ENCODE measurements at regions of chr21 and their contacts with region 1.

Region 1: DNA sequence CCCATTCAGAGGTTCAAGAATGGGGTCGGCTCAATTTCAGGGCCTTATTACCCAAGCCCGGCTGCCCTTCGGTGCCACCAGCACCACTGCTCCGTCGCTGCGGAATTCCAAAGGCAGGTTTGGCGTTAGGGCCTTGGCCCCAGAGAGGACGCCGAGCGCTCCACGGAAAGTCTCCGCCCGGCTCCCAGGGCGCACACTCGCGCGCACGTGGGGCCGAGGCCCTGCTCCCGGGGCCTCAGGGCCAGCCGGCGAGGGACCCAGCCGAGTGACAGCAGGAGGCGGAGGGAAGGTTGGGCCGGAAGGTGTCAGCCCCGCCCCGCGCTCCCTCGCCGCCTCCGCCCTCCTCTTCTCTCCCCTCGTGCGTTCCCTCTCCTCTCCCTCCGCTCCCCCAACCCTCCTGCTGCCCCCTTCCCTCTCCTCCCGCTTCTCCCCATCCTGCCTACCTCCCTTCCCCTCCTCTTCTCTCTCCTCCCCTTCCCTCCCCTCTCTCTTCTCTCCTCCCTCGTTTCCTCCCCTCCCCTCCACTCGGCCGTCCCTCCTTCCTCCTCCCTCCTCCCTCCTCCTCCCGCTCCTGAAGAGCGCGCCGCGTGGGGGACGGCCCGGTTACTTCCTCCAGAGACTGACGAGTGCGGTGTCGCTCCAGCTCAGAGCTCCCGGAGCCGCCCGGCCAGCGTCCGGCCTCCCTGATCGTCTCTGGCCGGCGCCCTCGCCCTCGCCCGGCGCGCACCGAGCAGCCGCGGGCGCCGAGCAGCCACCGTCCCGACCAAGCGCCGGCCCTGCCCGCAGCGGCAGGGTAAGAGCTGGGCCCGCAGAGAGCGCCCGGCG is at the start of gene ETS2:
- DNase-seq: peak; percentile 90 to 92
- H3K4me3 ChIP-seq: peak within 1 kb of the TSS; percentile 68 to 100
- H3K27ac ChIP-seq: peak within 1 kb of the TSS; percentile 94 to 98
- H3K4me1 ChIP-seq: no peaks in the 10 kb centered on the region
- H3K27me3 ChIP-seq: no peaks in the 10 kb centered on the region
- CTCF ChIP-seq: peak in 1 of 4 experiments; percentile 36
- POLR2A ChIP-seq: peak; percentile 83 to 95
- total RNA-seq, gene ETS2: 72.6 to 147 (median 98.5) TPM

Region 2: GRCh38 chr21:38755681-38756371 is 49.7 kb before region 1 on chr21:
- intact Hi-C with region 1: loop called (anchors 10 kb)
- DNase-seq: peak; percentile 70 to 81
- H3K4me3 ChIP-seq: no peak overlapping the region
- H3K27ac ChIP-seq: peak overlapping the region; percentile 67
- H3K4me1 ChIP-seq: no peaks in the 10 kb centered on the region
- H3K27me3 ChIP-seq: no peaks in the 10 kb centered on the region
- CTCF ChIP-seq: no peak
- POLR2A ChIP-seq: no peak

Region 3: GRCh38 chr21:38831526-38832467 is 26.3 kb after region 1 on chr21:
- intact Hi-C with region 1: no loop called
- DNase-seq: peak; percentile 83 to 95
- H3K4me3 ChIP-seq: no peak overlapping the region
- H3K27ac ChIP-seq: peak overlapping the region; percentile 51 to 68
- H3K4me1 ChIP-seq: peaks cover 0 to 5% of the 10 kb centered on the region in 2 donors
- H3K27me3 ChIP-seq: no peaks in the 10 kb centered on the region
- CTCF ChIP-seq: no peak
- POLR2A ChIP-seq: no peak

Region 4: GRCh38 chr21:40540216-40540615 is 1734.7 kb after region 1 on chr21:
- intact Hi-C with region 1: no loop called
- DNase-seq: no peak
- H3K4me3 ChIP-seq: no peak overlapping the region
- H3K27ac ChIP-seq: no peak overlapping the region
- H3K4me1 ChIP-seq: no peaks in the 10 kb centered on the region
- H3K27me3 ChIP-seq: no peaks in the 10 kb centered on the region
- CTCF ChIP-seq: no peak
- POLR2A ChIP-seq: no peak

Measured in uterus (tissue), 4 donors.